ENCODE measurements at regions of chr11 and their contacts with region 1.

Region 1: DNA sequence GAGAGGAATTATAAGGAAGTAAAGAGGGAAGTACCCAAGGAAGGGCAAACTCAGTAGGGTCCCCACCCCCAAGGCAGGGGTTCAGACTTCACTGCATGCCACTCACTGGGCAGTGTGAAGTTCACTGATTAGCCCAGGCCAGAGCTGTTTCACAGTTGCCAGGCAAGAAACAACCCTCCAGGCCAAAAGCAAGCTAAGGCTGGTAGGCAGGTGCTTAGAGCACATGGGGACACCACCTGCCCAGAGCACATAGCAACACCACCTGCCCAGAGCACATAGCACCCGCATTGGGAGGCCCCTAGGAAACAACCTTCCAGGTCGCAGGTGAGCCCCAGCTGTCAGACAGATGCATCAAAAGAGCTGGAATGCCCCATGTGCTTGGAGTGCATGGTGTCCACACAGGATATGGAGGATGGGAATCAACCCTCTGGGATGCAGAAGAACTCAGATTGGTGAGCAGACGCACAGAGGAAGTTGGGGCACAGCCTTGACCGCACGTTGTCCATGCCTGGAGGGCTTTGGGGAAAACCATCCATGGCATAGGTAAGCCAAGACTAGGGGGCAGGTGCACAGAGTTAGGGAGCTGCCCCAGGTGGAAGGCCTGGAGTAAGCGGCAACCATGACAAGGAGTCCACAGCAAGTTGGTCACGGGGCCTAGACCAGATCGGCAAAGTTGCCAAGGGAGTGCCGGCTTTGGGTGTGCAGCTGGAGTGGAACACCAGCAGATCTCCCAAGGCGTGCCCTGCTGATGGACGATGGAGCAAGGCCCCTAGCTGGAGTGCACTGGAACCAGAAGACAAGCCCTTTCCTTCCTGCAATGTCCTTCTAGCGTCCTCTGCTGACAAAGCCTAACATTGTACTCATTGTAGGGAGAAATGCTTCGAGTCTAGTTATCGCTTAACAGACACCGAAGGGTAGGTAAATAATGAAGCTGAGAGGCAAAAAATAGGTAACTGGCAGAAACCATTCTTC is 7.8 kb upstream of the TMEM216 start:
- DNase-seq: no peak
- ATAC-seq: no peak
- H3K4me3 ChIP-seq: no peak overlapping the region
- H3K4me3 Mint-ChIP-seq: no peak overlapping the region
- H3K27ac ChIP-seq: no peak overlapping the region
- H3K27ac Mint-ChIP-seq: no peak overlapping the region
- H3K4me1 ChIP-seq: peaks cover 6 to 8% of the 10 kb centered on the region in 2 donors
- H3K4me1 Mint-ChIP-seq: peaks cover 8% of the 10 kb centered on the region
- H3K27me3 ChIP-seq: no peaks in the 10 kb centered on the region
- H3K27me3 Mint-ChIP-seq: no peaks in the 10 kb centered on the region
- CTCF ChIP-seq: no peak

Region 2: GRCh38 chr11:61254403-61255025 is 130.0 kb before region 1 on chr11:
- CTCF ChIA-PET with region 1: interaction called, 22 read pairs
- POLR2A ChIA-PET with region 1: no interaction called
- intact Hi-C with region 1: loop called (anchors 10 kb)
- DNase-seq: peak; percentile 71
- ATAC-seq: peak; percentile 84
- H3K4me3 ChIP-seq: no peak overlapping the region
- H3K4me3 Mint-ChIP-seq: no peak overlapping the region
- H3K27ac ChIP-seq: no peak overlapping the region
- H3K27ac Mint-ChIP-seq: no peak overlapping the region
- H3K4me1 ChIP-seq: no peaks in the 10 kb centered on the region
- H3K4me1 Mint-ChIP-seq: no peaks in the 10 kb centered on the region
- H3K27me3 ChIP-seq: no peaks in the 10 kb centered on the region
- H3K27me3 Mint-ChIP-seq: no peaks in the 10 kb centered on the region
- CTCF ChIP-seq: peak; percentile 82

Region 3: DNA sequence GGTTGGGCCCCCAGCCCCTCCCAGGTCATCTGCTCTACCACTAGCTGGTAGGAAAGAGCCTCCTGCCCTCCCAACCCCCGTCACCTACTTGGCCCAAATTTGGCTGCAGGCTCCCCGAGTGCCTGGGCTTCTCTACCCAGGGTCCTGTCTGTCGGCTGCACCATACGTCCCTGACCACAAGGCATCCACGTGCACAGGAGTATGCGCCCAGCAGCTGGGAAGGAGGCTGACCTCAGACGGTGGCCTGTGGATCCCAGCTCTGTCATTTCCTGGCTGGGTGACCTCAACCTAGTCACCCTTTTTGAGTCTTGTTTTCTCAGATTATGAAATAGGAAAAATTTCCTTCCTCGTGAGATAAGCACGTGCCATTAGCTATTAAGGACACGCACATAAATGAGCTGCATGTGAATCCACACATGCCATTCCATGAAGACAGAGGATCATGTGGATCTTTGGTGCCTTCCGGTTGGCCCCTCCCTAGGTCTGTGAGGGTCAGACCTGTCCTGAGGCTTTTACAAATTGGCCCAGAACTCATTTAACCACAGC is 36.6 kb before region 1 on chr11:
- CTCF ChIA-PET with region 1: interaction called, 649 read pairs
- POLR2A ChIA-PET with region 1: no interaction called
- intact Hi-C with region 1: no loop called
- DNase-seq: no peak
- ATAC-seq: no peak
- H3K4me3 ChIP-seq: no peak overlapping the region
- H3K4me3 Mint-ChIP-seq: no peak overlapping the region
- H3K27ac ChIP-seq: no peak overlapping the region
- H3K27ac Mint-ChIP-seq: peak overlapping the region; percentile 56
- H3K4me1 ChIP-seq: peaks cover 3 to 18% of the 10 kb centered on the region in 2 donors
- H3K4me1 Mint-ChIP-seq: peaks cover 36% of the 10 kb centered on the region
- H3K27me3 ChIP-seq: no peaks in the 10 kb centered on the region
- H3K27me3 Mint-ChIP-seq: no peaks in the 10 kb centered on the region
- CTCF ChIP-seq: no peak

Region 4: DNA sequence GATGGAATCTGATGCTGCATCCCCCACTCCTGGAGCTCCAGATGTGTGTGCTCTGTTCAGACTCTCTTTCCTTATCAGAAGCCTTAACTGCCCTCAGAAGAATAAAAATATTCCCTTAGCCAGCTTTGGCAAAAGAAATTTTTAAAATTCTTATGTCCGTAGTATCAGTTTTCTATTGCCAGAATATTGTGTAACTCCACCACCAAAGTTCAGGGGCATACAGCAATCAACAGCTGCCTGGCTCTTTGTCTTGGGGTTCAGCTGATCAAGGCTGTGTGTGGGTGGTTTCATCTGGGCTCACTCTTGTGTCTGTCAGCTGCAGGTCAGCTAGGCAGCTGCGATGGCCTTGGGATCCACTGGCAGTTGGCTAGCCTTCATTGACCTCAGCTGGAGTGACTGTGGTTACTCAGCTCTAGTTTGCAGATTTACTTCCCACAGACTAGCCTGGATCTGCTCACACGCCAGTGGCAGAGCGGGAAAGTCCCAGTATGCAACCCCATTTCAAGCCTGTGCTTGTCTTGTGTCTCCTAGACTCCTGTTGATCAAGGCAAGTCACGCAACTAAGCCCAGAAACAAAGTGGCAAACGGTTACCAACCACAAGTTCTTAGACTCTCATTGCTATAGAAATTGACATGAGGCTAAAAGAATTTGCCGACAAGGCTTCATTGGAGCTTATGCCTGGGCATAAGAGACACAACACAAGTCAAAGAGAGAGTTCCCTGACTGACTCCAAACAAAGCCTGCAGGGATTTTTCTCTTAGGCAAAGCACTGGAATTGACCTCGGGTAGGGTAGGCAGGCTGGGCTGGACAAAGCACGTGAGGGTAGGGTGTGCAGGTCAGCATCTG is 15.0 kb before region 1 on chr11:
- CTCF ChIA-PET with region 1: interaction called, 206 read pairs
- POLR2A ChIA-PET with region 1: no interaction called
- intact Hi-C with region 1: no loop called
- DNase-seq: no peak
- ATAC-seq: no peak
- H3K4me3 ChIP-seq: no peak overlapping the region
- H3K4me3 Mint-ChIP-seq: no peak overlapping the region
- H3K27ac ChIP-seq: no peak overlapping the region
- H3K27ac Mint-ChIP-seq: peak overlapping the region; percentile 32
- H3K4me1 ChIP-seq: no peaks in the 10 kb centered on the region
- H3K4me1 Mint-ChIP-seq: no peaks in the 10 kb centered on the region
- H3K27me3 ChIP-seq: no peaks in the 10 kb centered on the region
- H3K27me3 Mint-ChIP-seq: no peaks in the 10 kb centered on the region
- CTCF ChIP-seq: no peak

Region 5: DNA sequence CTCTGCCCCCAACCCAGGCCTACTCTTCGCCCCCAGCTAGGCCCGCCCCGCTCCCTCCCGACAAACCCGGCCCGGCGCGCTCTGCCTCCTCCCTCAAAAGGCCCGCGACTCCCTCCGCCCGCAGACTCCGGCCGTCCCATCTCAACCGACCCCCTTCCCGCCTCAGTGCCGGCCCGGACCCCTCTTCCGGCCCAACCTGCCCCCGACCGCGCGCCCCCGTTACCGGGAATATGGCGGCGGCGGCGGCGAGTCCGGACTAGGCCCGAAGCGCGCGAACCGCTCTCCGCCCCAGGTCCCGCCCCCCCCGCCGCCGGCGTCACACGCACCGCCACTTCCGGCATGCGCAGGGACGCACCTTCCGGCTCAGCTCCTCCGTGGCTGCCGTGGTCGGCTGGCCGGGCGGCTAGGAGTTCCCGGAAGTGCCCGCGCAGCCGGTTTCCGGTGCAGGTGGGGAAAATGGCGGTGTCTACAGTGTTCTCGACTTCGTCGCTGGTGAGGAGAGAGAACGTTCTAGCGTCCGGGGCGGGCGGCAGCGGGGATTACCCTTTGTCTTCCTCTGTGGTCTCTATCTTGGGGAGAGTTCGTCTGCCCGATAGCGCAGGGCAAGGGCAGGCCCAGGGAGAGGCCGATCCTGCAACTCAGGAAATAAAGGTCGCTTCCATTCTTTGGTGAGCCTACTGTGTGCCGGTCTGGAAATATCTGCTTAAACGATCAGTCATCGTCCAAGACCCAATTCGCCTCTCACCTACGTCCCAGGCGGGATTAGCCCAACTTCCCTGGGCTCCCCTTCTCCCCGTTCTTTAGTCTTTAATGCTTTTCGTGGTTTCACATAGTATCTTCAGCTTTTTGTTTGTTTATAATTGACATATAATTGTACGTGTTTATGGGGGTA is 45.4 kb after region 1 on chr11 and contains the starts of genes CPSF7 and SDHAF2:
- CTCF ChIA-PET with region 1: interaction called, 22 read pairs
- POLR2A ChIA-PET with region 1: interaction called, 3 read pairs
- intact Hi-C with region 1: no loop called
- DNase-seq: peak; percentile 98
- ATAC-seq: peak; percentile 85
- H3K4me3 ChIP-seq: peak within 1 kb of the TSS; percentile 77 to 96 (median 89)
- H3K4me3 Mint-ChIP-seq: peak within 1 kb of the TSS; percentile 100
- H3K27ac ChIP-seq: peak within 1 kb of the TSS; percentile 97 to 100
- H3K27ac Mint-ChIP-seq: peak within 1 kb of the TSS; percentile 100
- H3K4me1 ChIP-seq: peaks cover 18 to 27% of the 10 kb centered on the region in 2 donors
- H3K4me1 Mint-ChIP-seq: peaks cover 51% of the 10 kb centered on the region
- H3K27me3 ChIP-seq: no peaks in the 10 kb centered on the region
- H3K27me3 Mint-ChIP-seq: no peaks in the 10 kb centered on the region
- CTCF ChIP-seq: no peak
- total RNA-seq, gene CPSF7: 165 and 167 TPM in 2 replicates
- total RNA-seq, gene SDHAF2: 48.9 and 54.0 TPM in 2 replicates